Common myeloid progenitor, CD34-positive (primary cell): ENCODE measurements at regions of chr13 and their contacts with region 1.

Region 1: DNA sequence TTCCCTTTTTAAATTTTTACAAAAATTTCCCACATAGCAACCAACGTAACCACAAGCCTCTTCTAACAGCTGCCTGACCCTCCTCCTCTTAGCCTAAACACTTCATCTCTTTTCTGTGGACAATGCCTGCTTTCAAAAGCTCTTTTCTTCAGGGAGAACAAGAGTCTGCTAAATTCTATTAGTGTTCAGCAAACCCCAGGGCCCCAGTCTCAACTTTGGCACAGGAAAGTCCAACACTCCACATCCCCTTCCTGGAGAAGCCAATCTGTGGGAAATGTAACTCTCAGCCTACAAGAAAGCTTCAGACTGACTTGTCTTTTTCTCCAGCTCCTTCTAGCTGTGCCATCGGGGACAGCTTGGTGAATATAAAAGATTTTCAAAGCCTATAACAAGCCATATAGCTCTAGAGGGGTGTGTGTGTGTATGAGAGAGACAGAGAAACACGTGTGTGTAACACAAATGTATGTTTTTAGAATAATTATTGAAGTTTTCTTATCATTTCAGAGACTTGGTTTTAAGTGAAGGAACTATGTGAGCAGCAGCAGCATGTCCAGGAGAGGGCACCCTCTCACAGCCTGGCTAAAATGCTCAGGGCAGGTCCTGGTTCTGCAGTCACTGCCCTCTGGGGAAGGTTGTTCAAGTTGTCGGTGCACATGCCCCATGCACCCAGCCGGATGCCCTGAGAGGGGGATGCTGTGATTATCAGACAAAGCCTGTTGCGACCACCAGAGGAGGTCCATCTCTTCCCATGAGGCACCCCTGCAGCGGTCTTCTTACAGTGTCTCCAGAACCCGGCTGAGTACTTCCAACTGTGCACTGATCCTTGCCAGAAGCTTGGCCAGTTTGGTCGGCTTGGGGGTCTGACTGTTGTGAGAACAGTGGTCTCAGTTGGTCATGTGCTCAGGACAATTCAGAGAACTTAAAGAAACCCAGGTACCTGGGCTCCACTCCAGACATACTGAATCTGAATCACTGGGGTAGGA is 34.4 kb downstream of the CCDC70 start:
- DNase-seq: peak; percentile 72 to 84 (median 78)
- H3K4me3 ChIP-seq: peak overlapping the region in 1 of 7 experiments; percentile 35
- H3K27ac ChIP-seq: no peak overlapping the region
- H3K4me1 ChIP-seq: peaks cover 0 to 34% (median 3%) of the 10 kb centered on the region in 4 experiments
- H3K27me3 ChIP-seq: no peaks in the 10 kb centered on the region

Region 2: GRCh38 chr13:51881296-51881695 is 14.9 kb before region 1 on chr13:
- CTCF ChIA-PET with region 1: interaction called, 12 read pairs
- POLR2A ChIA-PET with region 1: interaction called, 4 read pairs
- DNase-seq: peak in 2 of 3 donors; percentile 30 to 48
- H3K4me3 ChIP-seq: no peak overlapping the region
- H3K27ac ChIP-seq: no peak overlapping the region
- H3K4me1 ChIP-seq: no peaks in the 10 kb centered on the region
- H3K27me3 ChIP-seq: no peaks in the 10 kb centered on the region

Region 3: GRCh38 chr13:51911860-51912510 is 15.8 kb after region 1 on chr13:
- CTCF ChIA-PET with region 1: interaction called, 19 read pairs
- POLR2A ChIA-PET with region 1: no interaction called
- DNase-seq: peak in 1 of 3 donors; percentile 36
- H3K4me3 ChIP-seq: no peak overlapping the region
- H3K27ac ChIP-seq: no peak overlapping the region
- H3K4me1 ChIP-seq: peaks cover 0 to 34% (median 19%) of the 10 kb centered on the region in 4 experiments
- H3K27me3 ChIP-seq: no peaks in the 10 kb centered on the region

Region 4: DNA sequence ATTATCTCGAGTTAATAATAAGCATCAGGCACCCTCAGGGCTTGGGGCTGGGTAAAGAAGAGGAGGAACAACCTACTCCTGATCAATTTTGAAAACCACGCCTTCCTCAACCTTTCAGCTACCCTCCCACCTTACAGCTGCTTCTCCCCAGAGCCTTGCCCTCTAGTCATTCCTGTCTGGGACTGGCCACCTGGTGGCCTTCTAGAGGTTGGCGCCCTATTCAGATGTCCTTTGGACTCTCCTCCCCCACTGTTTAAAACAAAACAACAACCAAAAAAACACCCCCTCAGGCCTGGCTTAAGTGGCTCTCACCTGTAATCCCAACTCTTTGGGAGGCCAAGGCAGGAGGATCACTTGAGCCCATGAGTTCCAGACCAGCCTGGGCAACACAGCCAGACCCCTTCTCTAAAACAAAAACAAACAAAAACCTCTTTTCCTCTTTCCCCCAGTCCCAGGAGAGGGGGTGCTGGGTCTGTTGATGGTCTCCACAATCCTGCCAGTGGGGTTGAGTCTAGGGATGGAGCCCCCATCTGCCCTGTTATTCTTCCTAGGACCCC is 27.9 kb after region 1 on chr13:
- CTCF ChIA-PET with region 1: interaction called, 38 read pairs
- POLR2A ChIA-PET with region 1: no interaction called
- DNase-seq: peak; percentile 17 to 65 (median 28)
- H3K4me3 ChIP-seq: no peak overlapping the region
- H3K27ac ChIP-seq: no peak overlapping the region
- H3K4me1 ChIP-seq: no peaks in the 10 kb centered on the region
- H3K27me3 ChIP-seq: no peaks in the 10 kb centered on the region

Region 5: DNA sequence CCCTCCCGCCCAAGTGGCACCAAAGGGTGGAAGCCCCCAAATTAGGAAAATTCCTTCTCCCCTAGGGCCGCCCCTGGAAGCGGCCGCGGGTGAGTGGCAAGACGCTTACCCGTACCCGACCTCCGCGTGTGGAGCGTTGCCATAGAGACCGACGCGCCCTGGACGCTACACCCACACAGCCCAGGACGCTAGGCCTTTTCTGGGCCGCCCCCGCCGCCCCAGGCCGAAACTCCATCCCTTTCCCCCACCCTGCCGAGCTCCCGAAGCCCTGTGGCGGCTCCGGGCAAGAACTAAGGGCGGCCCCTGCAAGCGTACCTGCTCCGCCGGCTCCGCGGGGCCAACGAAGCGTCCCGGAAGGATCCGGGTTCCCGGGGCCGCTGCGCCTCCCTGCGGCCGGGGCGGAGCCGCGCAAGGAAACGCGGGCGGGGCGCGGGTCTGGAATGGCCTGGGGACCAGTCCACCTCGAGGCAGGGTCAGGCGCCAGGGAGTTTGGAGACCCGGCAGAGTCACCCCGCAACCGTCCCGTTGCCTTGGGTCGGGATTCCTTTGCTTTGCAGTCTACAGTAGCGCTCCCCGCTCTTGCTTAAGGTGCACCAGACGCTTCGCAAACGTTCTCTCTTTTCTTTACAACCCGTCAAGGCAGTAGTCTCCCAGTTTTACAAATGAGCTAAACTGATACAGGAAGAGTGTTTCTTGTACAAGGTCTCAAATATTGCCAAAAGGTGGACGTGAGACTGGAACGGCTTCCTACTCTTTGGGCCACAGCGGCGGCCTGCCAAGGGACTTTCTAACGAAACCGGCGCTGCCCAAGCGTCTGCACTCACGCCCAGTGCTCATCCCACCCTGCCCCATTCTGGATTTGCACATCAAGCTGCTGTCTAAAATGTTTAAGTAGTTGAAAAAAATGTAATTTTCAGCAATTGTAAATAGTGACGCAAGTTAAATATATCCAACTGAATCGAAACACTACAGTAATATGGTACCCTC is 232.8 kb after region 1 on chr13 and contains the start of gene NEK5:
- CTCF ChIA-PET with region 1: interaction called, 57 read pairs
- POLR2A ChIA-PET with region 1: no interaction called
- DNase-seq: peak; percentile 41 to 67 (median 59)
- H3K4me3 ChIP-seq: peak within 1 kb of the TSS; percentile 66 to 94 (median 76)
- H3K27ac ChIP-seq: no peak within 1 kb of the TSS
- H3K4me1 ChIP-seq: peaks cover 2 to 18% (median 13%) of the 10 kb centered on the region in 4 experiments
- H3K27me3 ChIP-seq: no peaks in the 10 kb centered on the region